H1 (cell line): ENCODE measurements at regions of chr7 and their contacts with region 1.

Region 1: GRCh38 chr7:100469227-100470044 is 5.4 kb upstream of the SPACDR start:
- DNase-seq: peak in 1 of 2 experiments; percentile 99
- H3K4me3 ChIP-seq: no peak overlapping the region
- H3K27ac ChIP-seq: no peak overlapping the region
- H3K4me1 ChIP-seq: peaks cover 0 to 11% (median 4%) of the 10 kb centered on the region in 4 experiments; a peak in 6 of 7 replicates
- H3K27me3 ChIP-seq: no peaks in the 10 kb centered on the region
- CTCF ChIP-seq: peak; percentile 91 to 98 (median 97)
- EP300 ChIP-seq: no peak
- POLR2A ChIP-seq: no peak
- RAD21 ChIP-seq: peak; percentile 95 to 96

Region 2: GRCh38 chr7:100456558-100456957 is 12.9 kb before region 1 on chr7:
- CTCF ChIA-PET with region 1: interaction called, 152 read pairs
- POLR2A ChIA-PET with region 1: interaction called, 5 read pairs
- DNase-seq: no peak
- H3K4me3 ChIP-seq: no peak overlapping the region
- H3K27ac ChIP-seq: no peak overlapping the region
- H3K4me1 ChIP-seq: peaks cover 0 to 8% (median 6%) of the 10 kb centered on the region in 4 experiments; a peak in 6 of 7 replicates
- H3K27me3 ChIP-seq: no peaks in the 10 kb centered on the region
- CTCF ChIP-seq: peak; percentile 32 to 41 (median 34); a peak in 3 of 4 replicates
- EP300 ChIP-seq: no peak
- POLR2A ChIP-seq: no peak
- RAD21 ChIP-seq: peak; percentile 31 to 43; a peak in 2 of 4 replicates

Region 3: GRCh38 chr7:100538654-100539435 is 69.4 kb after region 1 on chr7 and contains the start of gene AGFG2:
- CTCF ChIA-PET with region 1: interaction called, 11 read pairs
- POLR2A ChIA-PET with region 1: interaction called, 3 read pairs
- DNase-seq: peak; percentile 99
- H3K4me3 ChIP-seq: peak within 1 kb of the TSS; percentile 70 to 83 (median 77)
- H3K27ac ChIP-seq: no peak within 1 kb of the TSS
- H3K4me1 ChIP-seq: peaks cover 4 to 24% (median 13%) of the 10 kb centered on the region in 4 experiments; a peak in 4 of 7 replicates
- H3K27me3 ChIP-seq: peaks cover 0 to 3% (median 2%) of the 10 kb centered on the region in 4 experiments; a peak in 3 of 7 replicates
- CTCF ChIP-seq: no peak
- EP300 ChIP-seq: no peak
- POLR2A ChIP-seq: peak in 1 of 2 experiments; percentile 33; a peak in 1 of 3 replicates
- RAD21 ChIP-seq: peak in 1 of 2 experiments; percentile 8; a peak in 1 of 4 replicates
- total RNA-seq, gene AGFG2: 7.6 TPM in 2 replicates

Region 4: DNA sequence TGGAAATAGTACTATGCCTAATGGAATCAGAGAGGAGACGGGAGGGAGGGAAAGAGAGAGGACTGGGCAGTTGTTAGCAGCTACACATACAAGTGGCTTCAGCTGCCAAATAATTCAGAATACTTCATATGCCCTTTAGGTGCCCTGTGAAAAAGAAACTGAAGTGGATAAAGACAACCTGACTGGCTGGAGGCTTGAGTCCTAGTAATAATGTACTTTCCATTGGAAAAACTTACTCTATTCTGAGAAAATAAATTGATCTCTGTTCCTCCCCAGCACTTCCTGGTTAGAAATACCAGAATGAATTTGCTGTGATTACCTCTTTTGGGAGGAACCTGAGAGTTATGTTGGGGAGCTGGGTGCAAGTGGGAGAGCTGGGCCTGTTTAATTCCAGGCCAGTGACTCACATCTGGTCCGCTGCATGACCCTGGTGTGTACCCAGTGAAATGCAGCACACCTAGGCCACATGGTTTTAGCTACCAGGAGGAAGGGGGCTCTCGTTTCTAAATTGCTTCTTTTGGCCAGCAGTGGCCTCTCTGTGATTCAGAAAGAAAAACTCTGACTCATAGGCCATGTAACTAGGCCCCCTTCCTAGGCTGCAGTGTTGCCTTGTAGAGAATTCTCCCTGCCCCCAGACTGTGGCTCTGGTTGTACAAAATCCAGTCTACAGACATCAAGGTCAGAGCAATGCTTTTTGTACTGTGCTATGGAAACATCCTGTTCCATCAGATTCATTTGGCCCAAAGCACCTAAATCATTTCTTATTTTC is 76.1 kb after region 1 on chr7:
- CTCF ChIA-PET with region 1: interaction called, 14 read pairs
- POLR2A ChIA-PET with region 1: interaction called, 4 read pairs
- DNase-seq: no peak
- H3K4me3 ChIP-seq: no peak overlapping the region; a peak in 1 of 8 replicates
- H3K27ac ChIP-seq: peak overlapping the region; percentile 0; the same call in 1 of the 2 replicates
- H3K4me1 ChIP-seq: peaks cover 11 to 44% (median 26%) of the 10 kb centered on the region in 4 experiments; a peak in 6 of 7 replicates
- H3K27me3 ChIP-seq: peaks cover 0 to under 1% (median under 1%) of the 10 kb centered on the region in 4 experiments; a peak in 1 of 7 replicates
- CTCF ChIP-seq: peak in 1 of 3 experiments; percentile 12; a peak in 2 of 4 replicates
- EP300 ChIP-seq: no peak
- POLR2A ChIP-seq: peak in 1 of 2 experiments; percentile 33; a peak in 1 of 3 replicates
- RAD21 ChIP-seq: no peak

Region 5: GRCh38 chr7:100586266-100587025 is 117.0 kb after region 1 on chr7 and contains the start of gene FBXO24:
- CTCF ChIA-PET with region 1: interaction called, 10 read pairs
- POLR2A ChIA-PET with region 1: interaction called, 6 read pairs
- DNase-seq: peak; percentile 99 to 100
- H3K4me3 ChIP-seq: peak within 1 kb of the TSS; percentile 80 to 88 (median 80)
- H3K27ac ChIP-seq: peak within 1 kb of the TSS; percentile 86
- H3K4me1 ChIP-seq: peaks cover 0 to 36% (median 20%) of the 10 kb centered on the region in 4 experiments; a peak in 6 of 7 replicates
- H3K27me3 ChIP-seq: peaks cover 0 to 2% (median under 1%) of the 10 kb centered on the region in 4 experiments; a peak in 3 of 7 replicates
- CTCF ChIP-seq: 0 out of 4 replicates have a peak, but pooled peaks of 1 of the 3 experiments have one; percentile 0
- EP300 ChIP-seq: no peak
- POLR2A ChIP-seq: peak in 1 of 2 experiments; percentile 47; a peak in 2 of 3 replicates
- RAD21 ChIP-seq: 0 out of 4 replicates have a peak, but pooled peaks of 1 of the 2 experiments have one; percentile 4
- total RNA-seq, gene FBXO24: 0.35 and 0.59 TPM in 2 replicates

Region 6: DNA sequence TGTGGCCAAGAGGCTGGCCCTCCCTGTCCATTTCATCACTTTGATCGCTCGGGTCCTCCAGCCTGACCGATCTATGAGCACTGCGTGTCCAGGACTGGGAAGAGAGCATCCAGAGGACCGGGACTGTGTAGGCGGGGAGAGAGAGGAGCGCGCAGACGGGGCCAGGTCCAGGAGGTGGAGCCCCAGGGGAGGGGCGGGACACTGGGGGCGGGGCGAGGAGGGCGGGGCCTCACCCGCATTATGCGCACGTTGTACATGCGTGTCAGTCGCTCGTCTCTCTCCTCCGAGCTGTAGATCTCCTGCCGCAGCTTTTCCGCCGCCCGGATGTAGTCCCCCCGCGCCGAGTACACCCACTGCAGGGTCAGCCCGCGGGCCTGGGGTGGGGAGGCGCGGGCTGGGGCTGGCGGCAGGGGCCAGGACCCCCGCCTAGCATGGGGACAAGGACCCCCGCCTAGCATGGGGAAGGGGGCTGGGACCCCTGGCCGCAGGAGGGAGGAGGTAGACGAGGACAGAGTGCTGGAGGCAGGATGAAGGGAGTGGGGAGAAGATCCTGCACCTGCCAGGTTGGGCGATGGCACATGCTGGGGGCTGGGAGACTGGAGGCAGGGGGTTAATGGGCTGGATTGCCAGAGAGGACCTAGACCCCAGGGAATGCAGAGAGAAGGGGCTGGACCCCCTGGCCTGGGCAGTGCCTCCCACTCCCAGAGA is 157.2 kb after region 1 on chr7:
- CTCF ChIA-PET with region 1: interaction called, 13 read pairs
- POLR2A ChIA-PET with region 1: no interaction called
- DNase-seq: peak in 1 of 2 experiments; percentile 79
- H3K4me3 ChIP-seq: peak overlapping the region; percentile 24 to 63 (median 28)
- H3K27ac ChIP-seq: no peak overlapping the region
- H3K4me1 ChIP-seq: peaks cover 0 to 11% (median 6%) of the 10 kb centered on the region in 4 experiments; a peak in 6 of 7 replicates
- H3K27me3 ChIP-seq: peaks cover 0 to 5% (median 2%) of the 10 kb centered on the region in 4 experiments; a peak in 3 of 7 replicates
- CTCF ChIP-seq: no peak
- EP300 ChIP-seq: no peak
- POLR2A ChIP-seq: no peak
- RAD21 ChIP-seq: no peak